ENCODE measurements at regions of chr1 and their contacts with region 1.

Region 1: DNA sequence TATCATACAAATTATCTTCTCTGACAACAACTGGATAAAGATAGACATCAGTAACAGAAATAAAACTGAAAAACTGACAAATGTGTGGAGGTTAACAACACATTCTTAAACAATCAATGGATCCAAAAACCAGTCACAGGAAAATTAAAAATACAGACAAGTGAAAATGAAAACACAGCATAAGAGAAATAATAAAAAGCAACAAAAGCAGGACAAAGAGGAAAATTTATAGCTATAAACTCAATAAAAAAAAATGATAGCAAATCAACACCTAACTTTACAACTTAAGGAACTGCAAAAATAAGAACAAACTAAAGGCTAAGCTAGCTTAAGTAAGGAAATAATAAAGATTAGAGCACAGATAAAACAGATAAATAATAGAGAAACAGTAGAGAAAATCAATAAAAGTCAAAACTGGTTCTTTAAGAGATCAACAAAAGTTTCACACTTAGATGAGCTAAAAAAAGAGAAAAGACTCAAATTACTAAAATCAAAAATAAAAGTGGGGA is 161.4 kb upstream of the PRMT6 start:
- DNase-seq: no peak
- ATAC-seq: no peak
- H3K4me3 ChIP-seq: no peak overlapping the region
- H3K27ac ChIP-seq: no peak overlapping the region
- H3K4me1 ChIP-seq: no peaks in the 10 kb centered on the region
- H3K27me3 ChIP-seq: no peaks in the 10 kb centered on the region
- CTCF ChIP-seq: no peak

Region 2: DNA sequence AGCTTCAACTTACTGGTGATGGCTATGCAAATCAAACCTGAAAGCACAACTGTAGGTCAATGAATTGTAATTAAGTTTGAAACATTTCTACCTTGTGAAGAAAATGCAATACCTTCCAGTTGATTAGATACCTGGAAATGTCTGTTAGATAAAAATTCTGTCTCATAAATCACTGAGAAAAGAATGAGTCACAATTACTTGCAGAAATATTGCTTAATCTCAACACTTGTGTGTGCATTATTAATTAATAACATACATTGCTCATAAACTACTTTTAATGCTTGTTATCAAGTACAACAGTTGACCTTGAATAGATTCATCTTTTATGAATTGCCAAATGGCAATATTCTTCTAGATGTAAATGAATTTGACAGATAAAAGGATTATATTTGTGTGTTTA is 21.7 kb after region 1 on chr1:
- CTCF ChIA-PET with region 1: no interaction called
- POLR2A ChIA-PET with region 1: no interaction called
- in situ Hi-C with region 1: no loop called
- intact Hi-C with region 1: loop called (anchors 2 kb)
- DNase-seq: no peak
- ATAC-seq: no peak
- H3K4me3 ChIP-seq: no peak overlapping the region
- H3K27ac ChIP-seq: no peak overlapping the region
- H3K4me1 ChIP-seq: no peaks in the 10 kb centered on the region
- H3K27me3 ChIP-seq: no peaks in the 10 kb centered on the region
- CTCF ChIP-seq: no peak